GM12878 (cell line): ENCODE measurements at regions of chr7 and their contacts with region 1.

Region 1: DNA sequence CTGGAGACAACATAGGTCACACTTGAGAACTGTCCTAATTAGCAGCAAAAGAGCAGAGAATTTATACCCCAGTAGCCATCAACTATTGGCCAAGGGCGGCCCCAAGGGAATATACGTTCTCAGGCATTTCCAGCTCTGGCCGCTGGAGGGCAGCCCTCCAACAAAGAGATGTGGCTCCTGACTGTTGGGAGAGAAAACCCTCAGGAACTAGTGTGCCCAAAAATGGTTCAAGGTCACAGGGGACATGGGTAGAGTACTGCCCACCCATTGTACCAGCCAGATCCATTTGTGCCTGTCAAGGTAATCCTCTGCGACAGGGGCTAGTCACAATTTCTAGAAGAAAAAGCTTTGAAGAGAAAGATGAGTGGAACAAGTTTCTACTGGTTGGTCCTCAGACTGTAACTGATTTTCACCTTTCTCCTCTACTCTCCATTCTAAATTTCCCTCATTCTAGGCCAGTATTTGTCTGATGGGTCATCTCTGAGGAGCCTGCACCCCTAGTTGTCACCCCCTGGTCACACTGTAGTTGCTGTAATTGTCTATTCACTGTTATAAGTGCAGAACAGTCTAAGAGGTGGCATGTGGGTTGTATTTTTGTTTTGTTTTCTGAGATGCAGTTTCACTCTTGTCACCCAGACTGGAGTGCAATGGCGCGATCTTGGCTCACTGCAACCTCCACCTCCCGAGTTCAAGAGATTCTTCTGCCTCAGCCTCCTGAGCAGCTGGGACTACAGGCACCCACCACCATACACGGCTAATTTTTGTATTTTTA is 14.7 kb upstream of the C7orf33 start:
- DNase-seq: no peak
- ATAC-seq: peak; percentile 98
- H3K4me3 ChIP-seq: no peak overlapping the region
- H3K27ac ChIP-seq: no peak overlapping the region
- H3K4me1 ChIP-seq: no peaks in the 10 kb centered on the region
- H3K27me3 ChIP-seq: no peaks in the 10 kb centered on the region; a peak in 1 of 4 replicates
- CTCF ChIP-seq: peak; percentile 83 to 86 (median 86)
- EP300 ChIP-seq: no peak
- POLR2A ChIP-seq: no peak
- RAD21 ChIP-seq: peak; percentile 85

Region 2: DNA sequence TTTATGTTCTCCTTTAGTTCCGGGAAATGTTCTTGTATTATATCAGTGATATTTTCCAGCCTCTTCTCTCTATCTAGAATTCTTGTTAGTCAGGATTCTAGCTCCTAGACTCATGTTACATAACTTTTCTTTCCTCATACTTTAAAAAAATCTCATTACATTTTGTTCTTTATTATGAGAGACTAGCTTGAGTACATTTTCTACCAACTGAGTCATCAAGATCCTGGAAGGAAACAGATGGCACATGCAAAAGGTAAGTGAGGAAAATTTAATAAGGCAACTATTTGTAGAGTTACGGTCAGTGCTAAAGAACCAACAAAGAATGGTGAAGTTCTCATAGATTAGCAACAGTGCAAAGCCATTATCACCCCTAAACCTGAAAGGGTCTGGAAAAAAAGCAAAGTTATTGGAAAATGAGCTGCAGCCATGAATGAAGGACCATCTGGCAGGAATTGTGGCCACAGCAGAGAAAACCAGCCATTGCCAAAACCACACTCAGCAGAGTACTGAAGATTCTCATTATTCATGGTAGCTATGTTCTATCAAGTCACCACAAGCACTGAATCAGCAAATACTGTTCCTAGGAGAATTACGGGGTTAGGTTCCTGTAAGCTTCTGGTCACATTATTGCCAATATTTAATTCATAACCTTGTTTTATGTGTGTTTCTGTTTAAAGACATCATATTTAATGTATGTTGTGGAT is 83.5 kb before region 1 on chr7:
- CTCF ChIA-PET with region 1: no interaction called
- POLR2A ChIA-PET with region 1: no interaction called
- RAD21 ChIA-PET with region 1: no interaction called
- SMC1A ChIA-PET with region 1: no interaction called
- in situ Hi-C with region 1: no loop called
- intact Hi-C with region 1: no loop called
- DNase-seq: no peak
- ATAC-seq: no peak
- H3K4me3 ChIP-seq: no peak overlapping the region
- H3K27ac ChIP-seq: no peak overlapping the region
- H3K4me1 ChIP-seq: no peaks in the 10 kb centered on the region
- H3K27me3 ChIP-seq: peaks cover 0 to 6% of the 10 kb centered on the region in 2 experiments; a peak in 2 of 4 replicates
- CTCF ChIP-seq: no peak
- EP300 ChIP-seq: no peak
- POLR2A ChIP-seq: no peak
- RAD21 ChIP-seq: no peak

Region 3: GRCh38 chr7:148537435-148537834 is 38.4 kb before region 1 on chr7:
- CTCF ChIA-PET with region 1: interaction called, 10 read pairs
- POLR2A ChIA-PET with region 1: no interaction called
- RAD21 ChIA-PET with region 1: interaction called, 4 read pairs
- SMC1A ChIA-PET with region 1: interaction called, 3 read pairs
- in situ Hi-C with region 1: no loop called
- intact Hi-C with region 1: no loop called
- DNase-seq: no peak
- ATAC-seq: peak; percentile 88
- H3K4me3 ChIP-seq: no peak overlapping the region
- H3K27ac ChIP-seq: no peak overlapping the region
- H3K4me1 ChIP-seq: peaks cover 3% of the 10 kb centered on the region; the same call in 1 of the 2 replicates
- H3K27me3 ChIP-seq: no peaks in the 10 kb centered on the region
- CTCF ChIP-seq: no peak
- EP300 ChIP-seq: 0 out of 4 replicates have a peak, but pooled peaks of 1 of the 2 experiments have one; percentile 17
- POLR2A ChIP-seq: no peak
- RAD21 ChIP-seq: no peak

Region 4: GRCh38 chr7:148563583-148564274 is 12.1 kb before region 1 on chr7:
- CTCF ChIA-PET with region 1: interaction called, 39 read pairs
- POLR2A ChIA-PET with region 1: no interaction called
- RAD21 ChIA-PET with region 1: interaction called, 5 read pairs
- SMC1A ChIA-PET with region 1: interaction called, 40 read pairs
- in situ Hi-C with region 1: no loop called
- intact Hi-C with region 1: no loop called
- DNase-seq: no peak
- ATAC-seq: peak; percentile 79
- H3K4me3 ChIP-seq: peak overlapping the region; percentile 20; the same call in 1 of the 2 replicates
- H3K27ac ChIP-seq: 0 out of 2 replicates have a peak overlapping the region, but pooled peaks have one; percentile 10
- H3K4me1 ChIP-seq: peaks cover 18% of the 10 kb centered on the region; the same call in 1 of the 2 replicates
- H3K27me3 ChIP-seq: peaks cover 0 to 3% of the 10 kb centered on the region in 2 experiments; a peak in 1 of 4 replicates
- CTCF ChIP-seq: no peak
- EP300 ChIP-seq: no peak
- POLR2A ChIP-seq: no peak
- RAD21 ChIP-seq: no peak

Region 5: DNA sequence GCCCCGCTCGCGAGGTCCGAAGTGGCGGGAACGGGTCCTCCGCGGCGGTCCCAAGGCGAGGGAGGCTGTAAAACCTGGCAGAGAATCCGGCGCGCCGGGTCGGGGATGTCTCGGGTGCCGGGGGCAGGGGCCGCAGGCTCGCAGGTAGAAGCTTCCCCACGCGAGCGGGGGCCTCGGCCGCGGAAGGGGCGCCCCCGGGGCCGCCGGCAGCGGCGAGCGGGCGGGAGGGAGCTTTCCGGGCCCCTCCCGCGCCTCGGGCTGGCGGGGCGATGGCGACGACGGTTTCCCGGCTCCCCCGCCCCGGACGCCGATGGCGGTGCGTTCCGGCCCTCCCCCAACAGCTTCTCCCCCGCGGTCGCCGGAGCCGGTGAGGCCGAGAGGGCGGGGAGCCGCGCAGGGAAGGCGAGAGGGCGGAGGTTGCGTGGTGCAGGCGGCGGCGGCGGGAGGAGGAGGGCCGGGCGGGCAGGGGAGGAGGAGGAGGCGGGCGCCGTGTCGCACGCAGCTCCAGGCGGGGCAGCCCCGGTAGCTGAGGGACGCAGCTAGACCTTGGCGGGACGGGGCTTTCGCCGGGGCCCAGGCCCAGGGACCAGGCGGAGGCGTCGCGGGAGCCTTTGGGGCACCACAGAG is 122.7 kb after region 1 on chr7 and contains the start of gene CUL1:
- CTCF ChIA-PET with region 1: interaction called, 3 read pairs
- POLR2A ChIA-PET with region 1: no interaction called
- RAD21 ChIA-PET with region 1: interaction called, 3 read pairs
- SMC1A ChIA-PET with region 1: interaction called, 6 read pairs
- in situ Hi-C with region 1: no loop called
- intact Hi-C with region 1: loop called (anchors 5 kb)
- DNase-seq: no peak
- ATAC-seq: peak; percentile 82
- H3K4me3 ChIP-seq: peak within 1 kb of the TSS; percentile 94
- H3K27ac ChIP-seq: peak within 1 kb of the TSS; percentile 79
- H3K4me1 ChIP-seq: peaks cover 9% of the 10 kb centered on the region
- H3K27me3 ChIP-seq: no peaks in the 10 kb centered on the region
- CTCF ChIP-seq: no peak
- EP300 ChIP-seq: no peak
- POLR2A ChIP-seq: peak; percentile 83
- RAD21 ChIP-seq: no peak
- polyA plus RNA-seq, gene CUL1: 13.3 to 21.4 TPM